Endothelial cell of umbilical vein (primary cell): ENCODE measurements at regions of chr1 and their contacts with region 1.

Region 1: GRCh38 chr1:88180449-88181108 is 503.5 kb upstream of the PKN2 start:
- DNase-seq: peak; percentile 82
- H3K4me3 ChIP-seq: no peak overlapping the region
- H3K27ac ChIP-seq: no peak overlapping the region
- H3K4me1 ChIP-seq: peaks cover 6% of the 10 kb centered on the region
- H3K27me3 ChIP-seq: peaks cover 0 to 6% of the 10 kb centered on the region in 2 experiments
- CTCF ChIP-seq: peak; percentile 94 to 96
- POLR2A ChIP-seq: no peak

Region 2: GRCh38 chr1:87151500-87152421 is 1028.8 kb before region 1 on chr1:
- CTCF ChIA-PET with region 1: no interaction called
- POLR2A ChIA-PET with region 1: no interaction called
- dilution Hi-C with region 1: no loop called
- intact Hi-C with region 1: loop called (anchors 1 kb)
- DNase-seq: peak; percentile 64
- H3K4me3 ChIP-seq: peak overlapping the region in 2 of 3 experiments; percentile 0 to 46
- H3K27ac ChIP-seq: no peak overlapping the region
- H3K4me1 ChIP-seq: peaks cover 19% of the 10 kb centered on the region
- H3K27me3 ChIP-seq: peaks cover 9 to 15% of the 10 kb centered on the region in 2 experiments
- CTCF ChIP-seq: peak; percentile 52 to 62
- POLR2A ChIP-seq: no peak

Region 3: DNA sequence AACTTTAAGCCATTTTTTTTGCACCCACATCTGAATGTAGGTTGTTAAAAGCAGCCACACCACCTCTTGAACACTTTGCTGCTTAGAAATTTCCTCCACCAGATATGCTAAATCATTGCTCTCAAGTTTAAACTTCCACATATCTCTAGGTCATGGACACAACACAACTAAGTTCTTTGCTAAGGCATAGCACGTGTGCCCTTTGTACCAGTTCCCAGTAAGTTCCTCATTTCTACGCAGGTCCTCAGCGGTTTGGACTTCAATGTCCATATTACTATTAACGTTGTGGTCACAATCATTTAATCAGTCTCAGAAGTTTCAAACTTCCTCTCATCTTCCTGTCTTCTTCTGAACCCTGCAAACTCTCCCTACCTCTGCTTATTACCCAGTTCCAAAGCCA is 158.1 kb before region 1 on chr1:
- CTCF ChIA-PET with region 1: no interaction called
- POLR2A ChIA-PET with region 1: no interaction called
- dilution Hi-C with region 1: no loop called
- intact Hi-C with region 1: no loop called
- DNase-seq: no peak
- H3K4me3 ChIP-seq: no peak overlapping the region
- H3K27ac ChIP-seq: no peak overlapping the region
- H3K4me1 ChIP-seq: no peaks in the 10 kb centered on the region
- H3K27me3 ChIP-seq: no peaks in the 10 kb centered on the region
- CTCF ChIP-seq: no peak
- POLR2A ChIP-seq: no peak

Region 4: DNA sequence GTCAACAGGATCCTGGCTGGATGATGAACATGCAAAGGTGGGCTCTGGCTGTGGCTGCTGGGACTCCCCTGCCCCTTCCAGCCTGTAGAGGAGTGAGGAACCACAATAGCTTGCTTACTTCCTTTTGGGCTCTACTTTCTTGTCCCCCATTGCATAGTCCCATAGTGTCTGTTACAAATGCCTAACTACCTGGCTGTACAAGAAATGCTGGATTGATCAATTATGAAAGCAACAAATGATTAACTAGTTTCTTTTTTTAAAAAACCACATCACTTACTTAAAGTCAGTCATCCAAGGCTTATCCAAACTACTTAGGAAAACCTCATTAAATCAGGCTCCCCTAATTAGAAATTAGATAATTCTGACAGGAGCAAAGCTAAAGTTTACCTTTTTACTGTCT is 10.6 kb before region 1 on chr1:
- CTCF ChIA-PET with region 1: interaction called, 18 read pairs
- POLR2A ChIA-PET with region 1: no interaction called
- dilution Hi-C with region 1: no loop called
- intact Hi-C with region 1: no loop called
- DNase-seq: no peak
- H3K4me3 ChIP-seq: no peak overlapping the region
- H3K27ac ChIP-seq: no peak overlapping the region
- H3K4me1 ChIP-seq: no peaks in the 10 kb centered on the region
- H3K27me3 ChIP-seq: peaks cover 1 to 3% of the 10 kb centered on the region in 2 experiments
- CTCF ChIP-seq: no peak
- POLR2A ChIP-seq: no peak

Region 5: GRCh38 chr1:88208389-88208788 is 27.8 kb after region 1 on chr1:
- CTCF ChIA-PET with region 1: interaction called, 14 read pairs
- POLR2A ChIA-PET with region 1: no interaction called
- dilution Hi-C with region 1: no loop called
- intact Hi-C with region 1: no loop called
- DNase-seq: no peak
- H3K4me3 ChIP-seq: no peak overlapping the region
- H3K27ac ChIP-seq: no peak overlapping the region
- H3K4me1 ChIP-seq: peaks cover 10% of the 10 kb centered on the region
- H3K27me3 ChIP-seq: no peaks in the 10 kb centered on the region
- CTCF ChIP-seq: no peak
- POLR2A ChIP-seq: no peak

Region 6: GRCh38 chr1:88239205-88239604 is 58.6 kb after region 1 on chr1:
- CTCF ChIA-PET with region 1: interaction called, 16 read pairs
- POLR2A ChIA-PET with region 1: no interaction called
- dilution Hi-C with region 1: no loop called
- intact Hi-C with region 1: no loop called
- DNase-seq: no peak
- H3K4me3 ChIP-seq: no peak overlapping the region
- H3K27ac ChIP-seq: no peak overlapping the region
- H3K4me1 ChIP-seq: no peaks in the 10 kb centered on the region
- H3K27me3 ChIP-seq: no peaks in the 10 kb centered on the region
- CTCF ChIP-seq: no peak
- POLR2A ChIP-seq: no peak

Region 7: GRCh38 chr1:88266051-88266450 is 85.5 kb after region 1 on chr1:
- CTCF ChIA-PET with region 1: no interaction called
- POLR2A ChIA-PET with region 1: no interaction called
- dilution Hi-C with region 1: no loop called
- intact Hi-C with region 1: no loop called
- DNase-seq: no peak
- H3K4me3 ChIP-seq: no peak overlapping the region
- H3K27ac ChIP-seq: no peak overlapping the region
- H3K4me1 ChIP-seq: no peaks in the 10 kb centered on the region
- H3K27me3 ChIP-seq: peaks cover 2 to 3% of the 10 kb centered on the region in 2 experiments
- CTCF ChIP-seq: no peak
- POLR2A ChIP-seq: no peak

Region 8: DNA sequence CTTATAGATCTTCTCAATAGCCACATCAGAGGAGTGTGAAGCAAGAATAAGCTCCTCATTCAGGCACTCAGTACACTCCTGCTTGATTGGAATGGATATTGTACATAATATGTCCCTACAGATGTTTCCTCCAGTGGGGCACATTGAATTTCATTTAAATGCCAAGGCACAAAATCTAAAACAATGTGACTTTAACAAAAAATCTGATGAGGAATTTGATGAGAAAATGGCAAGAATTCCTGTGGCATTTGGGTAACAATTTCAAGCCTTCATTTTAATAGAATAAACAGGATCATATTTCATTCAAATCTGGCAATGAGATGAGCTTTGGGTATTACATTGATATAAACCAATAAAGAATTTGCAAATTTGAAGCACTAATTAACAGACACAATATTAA is 195.8 kb after region 1 on chr1:
- CTCF ChIA-PET with region 1: no interaction called
- POLR2A ChIA-PET with region 1: no interaction called
- dilution Hi-C with region 1: no loop called
- intact Hi-C with region 1: no loop called
- DNase-seq: no peak
- H3K4me3 ChIP-seq: no peak overlapping the region
- H3K27ac ChIP-seq: no peak overlapping the region
- H3K4me1 ChIP-seq: no peaks in the 10 kb centered on the region
- H3K27me3 ChIP-seq: peaks cover 0 to 3% of the 10 kb centered on the region in 2 experiments
- CTCF ChIP-seq: no peak
- POLR2A ChIP-seq: no peak

Region 9: DNA sequence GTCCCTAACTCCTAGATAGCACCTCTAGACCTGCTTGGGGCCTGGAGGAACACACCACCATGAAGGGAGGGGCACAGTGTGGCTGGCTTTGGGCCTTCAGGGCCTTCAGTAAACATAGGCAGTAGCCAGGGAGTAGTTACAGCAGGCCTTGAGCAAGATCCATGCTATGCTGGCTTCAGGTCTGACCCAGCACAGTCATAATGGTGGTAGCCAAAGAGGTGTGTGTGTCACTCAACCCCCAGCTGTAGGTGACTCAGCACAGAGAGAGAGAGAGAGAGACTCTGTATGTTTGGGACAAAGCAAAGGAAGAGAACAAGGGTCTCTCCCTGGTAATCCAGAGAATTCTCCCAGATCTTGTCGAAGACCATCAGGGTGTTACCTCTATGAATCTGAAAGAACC is 253.0 kb after region 1 on chr1:
- CTCF ChIA-PET with region 1: interaction called, 12 read pairs
- POLR2A ChIA-PET with region 1: no interaction called
- dilution Hi-C with region 1: no loop called
- intact Hi-C with region 1: no loop called
- DNase-seq: no peak
- H3K4me3 ChIP-seq: no peak overlapping the region
- H3K27ac ChIP-seq: no peak overlapping the region
- H3K4me1 ChIP-seq: no peaks in the 10 kb centered on the region
- H3K27me3 ChIP-seq: no peaks in the 10 kb centered on the region
- CTCF ChIP-seq: no peak
- POLR2A ChIP-seq: no peak

Region 10: DNA sequence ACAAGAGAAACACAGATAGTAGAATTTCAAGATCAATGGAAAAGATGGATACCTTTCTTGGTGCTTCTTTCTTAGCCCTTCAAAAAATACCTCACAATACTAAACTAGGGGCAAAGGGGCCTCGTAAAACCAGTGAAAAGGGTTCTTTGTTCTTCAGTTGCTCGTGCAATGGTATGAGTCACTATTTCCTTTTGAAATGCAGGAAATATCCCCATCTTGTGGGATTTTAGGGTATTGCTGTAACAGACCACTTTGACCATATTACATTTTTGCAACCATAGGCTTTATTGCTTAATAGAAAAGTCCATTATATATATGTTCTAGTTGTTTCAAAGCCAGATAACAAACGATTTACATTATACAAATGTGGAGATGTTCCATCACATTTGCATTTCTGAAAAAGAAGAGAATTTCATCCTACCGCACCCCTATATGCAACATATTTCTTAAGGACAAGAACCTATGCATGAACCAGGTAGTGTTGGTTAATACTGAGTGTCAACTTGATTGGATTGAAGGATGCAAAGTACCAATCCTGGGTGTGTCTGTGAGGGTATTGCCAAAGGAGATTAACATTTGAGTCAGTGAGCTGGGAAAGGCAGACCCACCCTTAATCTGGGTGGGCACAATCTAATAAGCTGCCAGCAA is 414.9 kb after region 1 on chr1:
- CTCF ChIA-PET with region 1: interaction called, 19 read pairs
- POLR2A ChIA-PET with region 1: no interaction called
- dilution Hi-C with region 1: no loop called
- intact Hi-C with region 1: loop called (anchors 1 kb)
- DNase-seq: peak; percentile 63
- H3K4me3 ChIP-seq: no peak overlapping the region
- H3K27ac ChIP-seq: no peak overlapping the region
- H3K4me1 ChIP-seq: no peaks in the 10 kb centered on the region
- H3K27me3 ChIP-seq: no peaks in the 10 kb centered on the region
- CTCF ChIP-seq: peak; percentile 26 to 39
- POLR2A ChIP-seq: no peak